ENCODE measurements at regions of chr1 and their contacts with region 1.

Region 1: DNA sequence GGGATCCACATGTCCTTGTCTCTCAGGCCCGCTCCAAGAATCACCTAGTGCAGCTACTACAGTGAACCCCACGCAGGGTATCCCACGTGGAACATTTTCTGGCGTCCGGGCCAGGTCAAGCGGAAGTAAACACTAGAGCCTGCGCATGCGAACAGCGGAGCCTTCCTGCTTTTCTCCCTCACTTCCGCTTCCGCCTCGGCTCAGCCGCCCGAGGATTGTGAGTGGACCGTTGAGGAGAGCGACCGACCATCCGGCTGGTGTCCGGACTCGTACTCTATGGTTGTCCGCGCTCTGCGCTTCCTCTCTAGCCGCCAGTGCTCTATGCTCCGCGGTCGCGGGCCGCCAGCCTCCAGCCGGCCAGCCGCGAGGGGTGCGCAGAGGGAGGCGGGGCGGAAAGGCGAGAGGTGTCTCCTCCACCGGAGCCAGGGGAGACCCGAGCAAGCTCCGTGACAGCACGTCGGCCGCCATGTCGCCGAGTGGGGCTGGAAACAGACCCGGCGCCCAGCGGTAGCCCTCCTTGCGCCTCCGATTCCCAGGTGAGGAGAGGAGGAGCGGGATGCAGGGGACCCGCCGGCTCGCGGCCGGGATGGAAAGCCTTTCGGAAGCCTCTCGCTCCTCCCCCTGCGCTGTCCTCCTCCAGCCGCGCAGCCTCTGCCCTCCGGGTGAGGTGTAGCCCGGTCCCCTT is at the starts of genes CNST and TFB2M:
- DNase-seq: peak; percentile 75 to 95 (median 89)
- ATAC-seq: peak; percentile 85
- H3K4me3 ChIP-seq: peak within 1 kb of the TSS; percentile 84
- H3K4me3 Mint-ChIP-seq: peak within 1 kb of the TSS; percentile 93 to 99 (median 98)
- H3K27ac ChIP-seq: peak within 1 kb of the TSS; percentile 89
- H3K27ac Mint-ChIP-seq: peak within 1 kb of the TSS; percentile 90 to 99 (median 96)
- H3K4me1 ChIP-seq: peaks cover 33 to 46% of the 10 kb centered on the region in 2 donors
- H3K4me1 Mint-ChIP-seq: peaks cover 35 to 61% (median 45%) of the 10 kb centered on the region in 7 donors
- H3K27me3 ChIP-seq: no peaks in the 10 kb centered on the region
- H3K27me3 Mint-ChIP-seq: no peaks in the 10 kb centered on the region
- total RNA-seq, gene CNST: 30.5 to 111 (median 80.2) TPM
- total RNA-seq, gene TFB2M: 9.5 to 12.2 (median 10.3) TPM

Region 2: DNA sequence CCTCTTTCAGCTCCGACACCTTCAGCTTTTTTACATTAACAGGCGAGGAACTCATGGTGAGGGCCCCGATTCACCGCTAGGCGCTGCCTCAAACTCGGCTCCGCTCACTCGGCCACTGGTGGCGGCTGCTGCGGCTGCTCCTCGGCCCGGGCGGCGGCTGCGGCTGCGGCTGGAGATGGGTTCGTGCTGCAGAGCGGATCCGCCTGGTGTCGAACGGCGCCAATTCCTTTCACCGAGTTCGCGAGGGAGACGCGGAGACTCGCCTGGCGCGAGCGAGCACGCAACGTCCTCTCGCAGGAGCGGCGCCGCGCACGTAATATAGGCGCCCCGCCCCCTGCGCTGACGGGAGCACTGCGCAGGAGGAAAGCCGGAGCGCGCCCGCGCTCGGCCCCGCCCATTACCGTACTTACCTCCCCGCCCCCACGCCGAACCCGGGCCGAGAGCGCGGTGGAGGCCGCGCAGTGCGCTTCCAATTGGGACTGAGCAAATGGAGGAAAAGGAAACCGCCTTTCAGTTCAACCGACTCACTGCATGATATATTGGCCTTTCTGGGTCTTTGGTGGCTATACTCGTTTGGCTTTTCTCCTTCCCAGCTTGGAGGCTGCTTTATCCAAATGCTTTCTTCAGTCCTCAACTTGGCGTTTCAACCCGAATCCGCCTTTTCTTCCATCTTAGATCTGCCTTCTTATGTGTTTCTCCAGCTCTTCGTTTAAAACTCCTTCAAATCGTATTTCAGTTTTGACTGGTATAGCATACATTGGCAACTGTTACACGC is 1701.8 kb before region 1 on chr1 and contains the start of gene HNRNPU:
- CTCF ChIA-PET with region 1: no interaction called
- POLR2A ChIA-PET with region 1: interaction called, 4 read pairs
- intact Hi-C with region 1: loop called (anchors 1 kb)
- DNase-seq: peak; percentile 93 to 99 (median 98)
- ATAC-seq: peak; percentile 81
- H3K4me3 ChIP-seq: peak within 1 kb of the TSS; percentile 78
- H3K4me3 Mint-ChIP-seq: peak within 1 kb of the TSS; percentile 86 to 98 (median 98)
- H3K27ac ChIP-seq: peak within 1 kb of the TSS; percentile 100
- H3K27ac Mint-ChIP-seq: peak within 1 kb of the TSS; percentile 93 to 100 (median 98)
- H3K4me1 ChIP-seq: peaks cover 23 to 25% of the 10 kb centered on the region in 2 donors
- H3K4me1 Mint-ChIP-seq: peaks cover 39 to 56% (median 51%) of the 10 kb centered on the region in 7 donors
- H3K27me3 ChIP-seq: no peaks in the 10 kb centered on the region
- H3K27me3 Mint-ChIP-seq: peaks cover 0 to 3% (median 0%) of the 10 kb centered on the region in 5 donors
- total RNA-seq, gene HNRNPU: 378 to 509 (median 428) TPM

Region 3: DNA sequence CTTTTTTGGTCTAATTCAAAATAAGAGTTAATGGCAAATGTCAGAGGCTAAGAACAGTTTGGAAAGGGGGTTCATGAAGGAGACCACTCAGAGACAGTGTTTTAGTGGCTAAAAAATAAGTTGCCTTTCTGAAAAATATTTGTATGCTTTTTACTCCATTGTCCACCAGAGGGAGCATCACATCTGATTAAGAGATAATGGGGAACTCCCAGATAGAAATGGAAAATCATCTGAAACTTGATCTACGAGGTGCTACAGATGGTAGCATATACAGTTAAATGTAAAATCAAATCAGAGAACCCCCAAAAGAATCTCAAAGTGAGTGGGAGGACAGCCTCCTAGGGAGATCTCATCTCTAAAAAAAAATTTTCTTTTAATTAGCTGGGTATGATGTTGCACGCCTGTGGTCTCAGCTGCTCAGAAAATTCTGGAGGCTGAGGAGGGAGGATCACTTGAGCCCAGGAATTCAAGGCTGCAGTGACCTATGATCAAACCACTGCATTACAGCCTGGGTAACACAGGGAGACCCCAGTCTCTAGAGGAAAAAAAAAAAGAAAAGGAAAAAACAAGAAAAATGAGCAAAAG is 68.8 kb before region 1 on chr1:
- CTCF ChIA-PET with region 1: no interaction called
- POLR2A ChIA-PET with region 1: interaction called, 5 read pairs
- intact Hi-C with region 1: loop called in 1 of 2 experiments (anchors 2 kb)
- DNase-seq: peak in 7 of 9 donors; percentile 46 to 74 (median 65)
- ATAC-seq: peak; percentile 86
- H3K4me3 ChIP-seq: no peak overlapping the region
- H3K4me3 Mint-ChIP-seq: no peak overlapping the region
- H3K27ac ChIP-seq: no peak overlapping the region
- H3K27ac Mint-ChIP-seq: peak overlapping the region in 4 of 9 donors; percentile 33 to 74 (median 49)
- H3K4me1 ChIP-seq: peaks cover 0 to 4% of the 10 kb centered on the region in 2 donors
- H3K4me1 Mint-ChIP-seq: peaks cover 7 to 25% (median 21%) of the 10 kb centered on the region in 7 donors
- H3K27me3 ChIP-seq: no peaks in the 10 kb centered on the region
- H3K27me3 Mint-ChIP-seq: no peaks in the 10 kb centered on the region

Region 4: DNA sequence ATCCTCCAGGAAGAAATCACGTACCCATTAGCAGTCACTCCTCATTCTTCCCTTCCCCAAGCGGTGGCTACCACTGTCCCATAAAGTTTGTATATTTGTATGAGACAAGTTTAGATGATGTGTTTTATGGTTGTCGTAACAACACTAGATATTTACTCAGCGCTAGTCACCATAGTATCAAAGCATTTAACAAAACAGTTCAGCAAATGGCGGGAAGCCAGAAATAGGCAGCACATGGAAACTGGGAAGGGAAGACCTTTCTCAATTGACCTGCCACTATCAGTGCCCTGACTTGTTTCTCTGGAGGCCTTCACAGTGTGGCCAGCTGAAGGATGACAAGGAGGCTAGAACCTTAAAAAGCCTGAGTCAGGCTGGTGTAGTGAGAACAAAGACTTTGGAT is 31.1 kb after region 1 on chr1:
- CTCF ChIA-PET with region 1: interaction called, 5 read pairs
- POLR2A ChIA-PET with region 1: interaction called, 6 read pairs
- intact Hi-C with region 1: loop called (anchors 1 to 2 kb)
- DNase-seq: no peak
- ATAC-seq: peak; percentile 28
- H3K4me3 ChIP-seq: no peak overlapping the region
- H3K4me3 Mint-ChIP-seq: peak overlapping the region in 4 of 10 donors; percentile 0 to 41 (median 8)
- H3K27ac ChIP-seq: no peak overlapping the region
- H3K27ac Mint-ChIP-seq: peak overlapping the region in 2 of 9 donors; percentile 67 to 70
- H3K4me1 ChIP-seq: peaks cover 0 to 18% of the 10 kb centered on the region in 2 donors
- H3K4me1 Mint-ChIP-seq: peaks cover 7 to 88% (median 76%) of the 10 kb centered on the region in 7 donors
- H3K27me3 ChIP-seq: no peaks in the 10 kb centered on the region
- H3K27me3 Mint-ChIP-seq: no peaks in the 10 kb centered on the region

Region 5: DNA sequence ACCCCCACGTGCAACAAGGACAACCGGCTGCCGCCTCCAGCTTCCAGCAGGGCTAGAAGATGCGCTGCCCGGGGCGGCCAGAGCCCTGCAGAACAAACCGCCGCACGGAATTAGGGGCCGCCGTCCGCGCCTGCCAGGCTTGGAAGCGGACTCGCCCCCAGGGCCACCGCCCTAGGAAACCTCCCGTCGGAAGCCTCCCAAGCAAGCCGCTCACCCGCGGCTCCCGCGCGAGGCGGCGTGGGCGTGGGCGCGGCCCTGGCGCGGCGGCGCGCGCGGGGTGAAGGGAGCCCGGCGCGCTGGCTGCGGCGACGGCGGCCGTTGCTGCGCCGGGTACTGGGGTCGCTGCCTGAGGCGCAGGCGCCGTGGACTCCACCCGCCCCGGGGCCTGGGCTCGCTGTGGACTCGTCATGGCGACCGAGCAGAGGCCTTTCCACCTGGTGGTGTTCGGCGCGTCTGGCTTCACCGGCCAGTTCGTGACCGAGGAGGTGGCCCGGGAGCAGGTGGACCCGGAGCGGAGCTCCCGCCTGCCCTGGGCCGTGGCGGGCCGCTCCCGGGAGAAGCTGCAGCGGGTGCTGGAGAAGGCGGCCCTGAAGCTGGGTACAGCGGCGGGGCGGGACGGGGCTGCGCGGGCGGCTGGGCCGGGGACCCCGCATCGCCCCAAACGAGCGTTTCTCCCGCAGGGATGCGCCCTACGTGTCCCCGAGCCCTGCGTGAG is 157.9 kb after region 1 on chr1 and contains the start of gene SCCPDH:
- CTCF ChIA-PET with region 1: no interaction called
- POLR2A ChIA-PET with region 1: no interaction called
- intact Hi-C with region 1: loop called in 1 of 2 experiments (anchors 1 kb)
- DNase-seq: peak; percentile 21 to 82 (median 50)
- ATAC-seq: peak; percentile 92
- H3K4me3 ChIP-seq: peak within 1 kb of the TSS; percentile 60
- H3K4me3 Mint-ChIP-seq: peak within 1 kb of the TSS; percentile 81 to 92 (median 90)
- H3K27ac ChIP-seq: peak within 1 kb of the TSS; percentile 45
- H3K27ac Mint-ChIP-seq: peak within 1 kb of the TSS; percentile 34 to 75 (median 46)
- H3K4me1 ChIP-seq: no peaks in the 10 kb centered on the region
- H3K4me1 Mint-ChIP-seq: peaks cover 5 to 17% (median 9%) of the 10 kb centered on the region in 7 donors
- H3K27me3 ChIP-seq: no peaks in the 10 kb centered on the region
- H3K27me3 Mint-ChIP-seq: peaks cover 0 to 10% (median 7%) of the 10 kb centered on the region in 5 donors
- total RNA-seq, gene SCCPDH: 3.5 to 14.5 (median 5.3) TPM

Region 6: DNA sequence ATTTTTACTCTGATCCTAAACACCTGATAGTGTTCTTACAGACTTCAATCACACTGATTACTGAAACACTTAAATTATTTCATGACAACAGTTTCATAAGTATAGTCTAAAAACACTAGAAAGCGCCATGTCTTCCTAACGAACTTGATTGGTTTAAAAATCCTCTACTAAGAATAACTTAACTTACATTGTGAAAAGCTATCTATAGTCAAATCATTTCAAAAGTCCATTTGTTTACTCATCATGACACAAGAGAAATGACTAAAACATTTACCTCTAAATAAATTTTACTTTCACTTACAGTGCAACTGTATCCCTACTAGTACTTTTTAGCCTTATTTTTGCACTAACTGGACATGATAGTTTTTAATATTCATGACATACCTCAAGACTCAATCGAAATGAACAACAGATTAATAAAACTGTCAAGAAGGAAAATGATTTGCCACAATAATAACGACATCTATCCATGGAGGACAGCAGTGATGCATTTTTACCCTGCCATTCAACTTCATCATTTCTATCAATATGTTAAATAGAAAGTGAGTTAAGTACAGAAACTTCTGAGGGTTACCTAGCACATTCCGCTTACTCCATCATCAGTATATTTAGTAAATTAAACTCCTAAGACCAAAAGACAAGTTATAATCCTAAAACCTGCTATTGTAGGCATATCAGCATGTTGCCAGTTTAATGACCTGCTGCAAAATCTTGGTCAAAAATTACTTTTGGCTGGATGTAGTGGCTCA is 327.1 kb after region 1 on chr1:
- CTCF ChIA-PET with region 1: no interaction called
- POLR2A ChIA-PET with region 1: no interaction called
- intact Hi-C with region 1: no loop called
- DNase-seq: no peak
- ATAC-seq: no peak
- H3K4me3 ChIP-seq: no peak overlapping the region
- H3K4me3 Mint-ChIP-seq: no peak overlapping the region
- H3K27ac ChIP-seq: no peak overlapping the region
- H3K27ac Mint-ChIP-seq: peak overlapping the region in 1 of 9 donors; percentile 56
- H3K4me1 ChIP-seq: no peaks in the 10 kb centered on the region
- H3K4me1 Mint-ChIP-seq: peaks cover 0 to 10% (median 5%) of the 10 kb centered on the region in 7 donors
- H3K27me3 ChIP-seq: no peaks in the 10 kb centered on the region
- H3K27me3 Mint-ChIP-seq: no peaks in the 10 kb centered on the region

Region 7: GRCh38 chr1:247103859-247104591 is 537.8 kb after region 1 on chr1 and contains the start of gene ZNF669:
- CTCF ChIA-PET with region 1: no interaction called
- POLR2A ChIA-PET with region 1: no interaction called
- intact Hi-C with region 1: loop called (anchors 1 kb)
- DNase-seq: peak; percentile 84 to 91 (median 89)
- ATAC-seq: peak; percentile 99
- H3K4me3 ChIP-seq: peak within 1 kb of the TSS; percentile 96
- H3K4me3 Mint-ChIP-seq: peak within 1 kb of the TSS; percentile 83 to 93 (median 91)
- H3K27ac ChIP-seq: peak within 1 kb of the TSS; percentile 82
- H3K27ac Mint-ChIP-seq: peak within 1 kb of the TSS; percentile 70 to 93 (median 81)
- H3K4me1 ChIP-seq: peaks cover 3 to 4% of the 10 kb centered on the region in 2 donors
- H3K4me1 Mint-ChIP-seq: peaks cover 6 to 24% (median 16%) of the 10 kb centered on the region in 7 donors
- H3K27me3 ChIP-seq: no peaks in the 10 kb centered on the region
- H3K27me3 Mint-ChIP-seq: peaks cover 15 to 25% (median 21%) of the 10 kb centered on the region in 5 donors
- total RNA-seq, gene ZNF669: 7.9 to 15.8 (median 11.5) TPM

Region 8: DNA sequence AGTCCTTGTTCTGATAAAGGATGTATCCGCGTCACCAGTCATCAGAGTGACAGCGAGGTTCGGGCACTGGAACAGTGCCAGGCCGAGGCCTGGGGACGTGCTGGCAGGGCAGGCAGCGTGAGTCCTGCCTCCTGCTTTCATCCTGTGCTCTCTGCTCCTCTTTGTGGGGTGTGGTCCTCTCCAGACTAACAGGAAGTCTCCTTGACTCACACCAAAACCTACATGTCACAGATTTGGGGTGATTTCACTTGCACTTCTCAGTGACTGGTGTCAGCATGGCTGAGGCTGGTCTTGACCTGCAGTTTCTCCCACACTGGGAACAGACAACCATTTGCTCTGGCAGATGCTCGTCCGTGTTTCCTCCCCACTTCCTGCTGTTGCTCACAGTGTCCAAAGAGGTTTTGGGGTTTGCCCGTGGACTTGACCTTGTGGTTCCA is 840.9 kb after region 1 on chr1:
- CTCF ChIA-PET with region 1: no interaction called
- POLR2A ChIA-PET with region 1: no interaction called
- intact Hi-C with region 1: loop called in 1 of 2 experiments (anchors 5 kb)
- DNase-seq: peak; percentile 40 to 63 (median 53)
- ATAC-seq: peak; percentile 91
- H3K4me3 ChIP-seq: peak overlapping the region; percentile 30
- H3K4me3 Mint-ChIP-seq: peak overlapping the region; percentile 69 to 89 (median 78)
- H3K27ac ChIP-seq: peak overlapping the region; percentile 50
- H3K27ac Mint-ChIP-seq: peak overlapping the region; percentile 76 to 98 (median 92)
- H3K4me1 ChIP-seq: peaks cover 20 to 33% of the 10 kb centered on the region in 2 donors
- H3K4me1 Mint-ChIP-seq: peaks cover 25 to 42% (median 38%) of the 10 kb centered on the region in 7 donors
- H3K27me3 ChIP-seq: no peaks in the 10 kb centered on the region
- H3K27me3 Mint-ChIP-seq: peaks cover 0 to 46% (median 0%) of the 10 kb centered on the region in 5 donors

Measured in naive thymus-derived CD4-positive, alpha-beta T cell (primary cell).